PC-9 (cell line): ENCODE measurements at regions of chrX and their contacts with region 1.

Region 1: DNA sequence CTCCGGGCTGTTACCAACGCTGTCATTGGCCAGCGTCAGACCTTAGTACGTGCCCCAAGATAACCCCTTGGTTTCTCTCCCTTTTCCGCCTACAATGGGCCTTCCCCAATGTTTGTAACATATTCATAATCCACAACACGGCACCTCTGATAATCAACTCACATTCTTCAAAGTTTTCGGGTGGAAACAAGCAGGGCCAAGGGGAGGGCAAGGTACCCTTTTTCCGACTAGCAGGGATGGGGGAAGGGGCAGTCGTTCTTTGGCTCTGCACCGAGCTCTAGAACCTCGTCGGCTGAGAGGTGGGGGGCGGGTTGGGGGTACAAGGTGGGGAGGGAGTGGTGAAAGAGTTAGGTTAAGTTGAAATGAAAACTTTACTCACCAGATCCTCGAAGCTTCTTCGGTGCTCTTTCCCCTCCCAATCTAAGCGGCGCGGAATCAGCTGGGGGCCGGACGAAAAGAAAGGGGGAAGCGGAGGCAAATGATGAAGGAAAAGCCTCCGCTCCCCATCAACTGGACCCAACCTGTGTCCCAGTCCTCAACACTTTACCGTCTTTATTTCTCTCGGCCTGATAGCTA is 1.4 kb downstream of the BRWD3 start:
- DNase-seq: peak; percentile 63 to 72
- H3K4me3 ChIP-seq: peak overlapping the region; percentile 79
- H3K27ac ChIP-seq: peak overlapping the region; percentile 37; the same call in 1 of the 2 replicates
- H3K4me1 ChIP-seq: 0 out of 2 replicates have a peak, but pooled peaks cover 4% of the 10 kb centered on the region
- H3K27me3 ChIP-seq: no peaks in the 10 kb centered on the region
- CTCF ChIP-seq: no peak

Region 2: GRCh38 chrX:80705379-80705778 is 102.9 kb before region 1 on chrX:
- CTCF ChIA-PET with region 1: no interaction called
- POLR2A ChIA-PET with region 1: interaction called, 13 read pairs
- intact Hi-C with region 1: no loop called
- DNase-seq: no peak
- H3K4me3 ChIP-seq: no peak overlapping the region
- H3K27ac ChIP-seq: no peak overlapping the region
- H3K4me1 ChIP-seq: no peaks in the 10 kb centered on the region
- H3K27me3 ChIP-seq: no peaks in the 10 kb centered on the region
- CTCF ChIP-seq: no peak

Region 3: DNA sequence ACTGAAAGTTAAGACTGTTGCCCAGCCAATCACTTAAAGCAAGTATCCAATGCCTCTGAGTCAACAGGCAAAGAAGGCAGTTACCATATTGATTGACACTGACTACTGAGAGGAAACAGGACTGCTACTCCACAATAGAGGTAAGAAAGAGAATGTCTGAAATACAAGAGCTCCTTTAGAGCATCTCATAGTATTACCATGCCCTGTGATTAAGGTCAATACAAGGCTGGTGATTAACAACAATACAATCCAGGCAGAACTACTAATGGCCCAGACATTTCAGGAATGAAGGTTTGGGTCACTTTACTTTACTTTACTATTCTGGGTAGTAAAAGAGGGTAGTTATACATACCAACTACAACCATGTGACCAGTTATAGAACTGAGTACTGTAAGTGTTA is 43.1 kb before region 1 on chrX:
- CTCF ChIA-PET with region 1: no interaction called
- POLR2A ChIA-PET with region 1: no interaction called
- intact Hi-C with region 1: loop called (anchors 5 kb)
- DNase-seq: peak; percentile 0 to 63
- H3K4me3 ChIP-seq: no peak overlapping the region
- H3K27ac ChIP-seq: peak overlapping the region; percentile 32; the same call in 1 of the 2 replicates
- H3K4me1 ChIP-seq: peaks cover 14% of the 10 kb centered on the region
- H3K27me3 ChIP-seq: no peaks in the 10 kb centered on the region
- CTCF ChIP-seq: no peak

Region 4: DNA sequence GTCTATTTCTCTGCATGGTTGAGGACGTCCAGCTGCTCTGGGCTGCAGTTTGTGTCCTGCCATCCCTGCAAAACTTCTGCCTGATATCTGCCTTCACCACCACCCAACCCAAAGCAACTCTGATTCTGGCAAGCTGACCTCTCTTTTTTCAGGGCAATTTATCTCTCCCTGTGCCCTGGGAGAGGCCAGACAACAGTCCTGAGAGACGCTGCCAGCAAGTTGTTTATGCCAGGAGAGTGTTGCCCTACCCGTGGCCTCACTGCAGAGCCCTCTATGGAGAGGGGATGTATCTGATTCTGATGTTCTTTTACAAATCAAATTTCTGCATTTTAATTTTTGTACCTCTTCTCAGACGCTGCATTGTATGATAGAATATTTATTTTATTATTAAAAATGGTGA is 38.0 kb after region 1 on chrX:
- CTCF ChIA-PET with region 1: no interaction called
- POLR2A ChIA-PET with region 1: interaction called, 28 read pairs
- intact Hi-C with region 1: no loop called
- DNase-seq: no peak
- H3K4me3 ChIP-seq: no peak overlapping the region
- H3K27ac ChIP-seq: no peak overlapping the region
- H3K4me1 ChIP-seq: no peaks in the 10 kb centered on the region
- H3K27me3 ChIP-seq: no peaks in the 10 kb centered on the region
- CTCF ChIP-seq: no peak